RWPE1 (cell line): ENCODE measurements at regions of chr3 and their contacts with region 1.

Region 1: DNA sequence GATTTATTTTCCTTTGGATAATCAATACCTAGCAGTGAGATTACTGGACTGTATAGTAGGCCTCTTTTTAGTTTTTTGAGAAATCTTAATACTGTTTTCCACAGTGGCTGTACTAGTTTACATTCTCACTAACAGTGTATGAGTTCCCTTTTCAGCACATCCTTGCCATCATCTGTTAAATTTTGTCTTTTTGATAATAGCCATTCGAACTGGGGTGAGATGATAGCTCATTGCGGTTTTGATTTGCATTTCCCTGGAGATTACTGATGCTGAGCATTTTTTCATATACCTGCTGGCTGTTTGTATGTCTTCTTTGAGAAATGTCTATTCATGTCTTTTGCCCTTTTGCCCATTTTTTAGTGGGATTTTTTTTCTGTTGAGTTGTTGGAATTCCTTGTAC is 210.8 kb downstream of the CGGBP1 start:
- DNase-seq: no peak
- H3K27ac ChIP-seq: no peak overlapping the region
- CTCF ChIP-seq: no peak

Region 2: GRCh38 chr3:87260270-87260669 is 587.7 kb before region 1 on chr3:
- CTCF ChIA-PET with region 1: interaction called, 11 read pairs
- POLR2A ChIA-PET with region 1: no interaction called
- DNase-seq: peak; percentile 15
- H3K27ac ChIP-seq: no peak overlapping the region
- CTCF ChIP-seq: peak; percentile 77

Region 3: GRCh38 chr3:87958289-87958688 is 110.3 kb after region 1 on chr3:
- CTCF ChIA-PET with region 1: no interaction called
- POLR2A ChIA-PET with region 1: no interaction called
- DNase-seq: no peak
- H3K27ac ChIP-seq: no peak overlapping the region
- CTCF ChIP-seq: no peak